ENCODE measurements at regions of chr9 and their contacts with region 1.

Region 1: GRCh38 chr9:129080602-129081387 is at the start of gene DOLPP1:
- DNase-seq: peak; percentile 99

Region 2: DNA sequence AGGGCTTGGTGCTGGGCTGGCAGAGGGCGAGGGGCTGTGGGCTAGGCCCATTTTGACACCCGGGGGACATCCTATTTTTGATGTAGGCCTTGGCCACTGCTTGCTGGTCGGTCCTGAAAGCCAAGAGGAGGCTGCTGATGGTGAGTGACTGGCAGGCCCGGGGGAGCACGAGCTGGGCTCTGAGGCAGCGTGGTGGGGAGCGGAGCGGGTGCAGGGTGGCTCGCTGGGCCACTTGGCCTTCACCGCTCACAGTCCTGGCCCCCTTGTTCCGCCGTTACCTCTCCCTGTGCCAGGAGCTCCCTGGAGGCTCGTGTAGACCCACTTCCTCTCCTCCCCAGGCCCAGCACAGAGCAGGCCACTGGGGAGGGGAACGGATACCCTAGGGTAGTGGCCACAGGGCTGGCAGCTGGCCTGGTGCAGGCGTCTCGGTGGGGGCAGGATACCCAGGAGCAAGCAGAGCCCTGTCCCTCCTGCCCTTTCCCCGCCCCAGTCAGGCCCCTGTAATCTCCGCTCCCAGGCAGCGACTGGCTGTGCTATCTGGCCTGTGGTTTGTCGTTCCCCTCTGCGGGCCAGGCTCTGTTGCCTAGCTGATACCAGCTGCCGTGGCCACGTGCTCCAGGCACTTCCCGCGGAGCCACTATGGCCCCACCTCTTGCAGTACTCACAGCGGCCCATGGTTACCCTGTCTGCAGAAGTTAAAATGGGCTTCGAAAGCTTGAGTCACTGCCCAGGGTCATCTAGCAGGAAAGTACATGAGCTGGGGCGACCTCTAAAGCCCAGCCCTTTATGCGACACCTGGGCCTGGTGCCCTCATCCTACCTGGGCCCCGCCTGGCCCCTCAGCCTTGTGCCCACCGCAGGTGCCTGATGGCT is 11.6 kb before region 1 on chr9:
- CTCF ChIA-PET with region 1: no interaction called
- POLR2A ChIA-PET with region 1: interaction called, 10 read pairs
- DNase-seq: no peak

Region 3: DNA sequence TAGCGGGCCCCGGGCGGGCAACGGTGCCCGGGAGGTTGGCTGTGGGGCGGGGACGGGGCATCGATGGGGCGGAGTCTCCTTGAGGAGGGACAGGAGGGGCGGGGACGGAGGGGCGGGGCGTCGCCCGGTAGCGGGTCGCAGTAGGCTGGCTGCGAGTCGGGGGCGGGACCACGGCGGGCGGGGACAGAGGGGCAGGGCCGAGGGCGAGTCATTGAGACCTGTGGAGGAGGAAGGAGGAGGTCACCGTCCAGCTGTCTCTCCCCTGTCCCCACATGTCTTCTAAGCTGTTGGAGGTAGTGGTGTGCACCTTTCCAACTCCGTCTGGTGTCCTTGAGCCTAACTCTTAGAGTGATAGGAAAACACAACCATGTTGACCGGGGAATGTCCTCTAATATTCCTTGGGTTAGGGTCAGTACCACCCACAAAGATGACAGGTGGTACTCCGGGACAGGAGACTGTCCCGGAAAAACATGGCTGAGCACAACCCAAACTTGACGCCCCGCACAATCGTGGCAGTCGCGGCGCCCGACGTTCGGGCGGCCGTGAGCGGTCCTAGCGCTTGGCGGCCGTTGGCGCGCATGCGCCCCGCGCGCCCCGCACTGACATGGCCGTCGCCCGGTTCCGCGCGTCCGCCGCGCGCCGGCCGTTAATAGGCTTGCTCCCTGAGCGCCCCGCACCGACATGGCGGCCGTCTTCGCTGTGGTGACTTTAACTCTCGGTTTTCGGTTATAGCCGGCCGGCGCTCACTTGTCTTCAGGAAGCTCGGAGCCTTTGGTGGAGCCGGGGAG is 30.1 kb after region 1 on chr9 and contains the starts of genes CRAT and PTPA:
- CTCF ChIA-PET with region 1: no interaction called
- POLR2A ChIA-PET with region 1: interaction called, 10 read pairs
- DNase-seq: peak; percentile 99

Measured in HEK293T (cell line).